ENCODE measurements at regions of chr6 and their contacts with region 1.

Region 1: DNA sequence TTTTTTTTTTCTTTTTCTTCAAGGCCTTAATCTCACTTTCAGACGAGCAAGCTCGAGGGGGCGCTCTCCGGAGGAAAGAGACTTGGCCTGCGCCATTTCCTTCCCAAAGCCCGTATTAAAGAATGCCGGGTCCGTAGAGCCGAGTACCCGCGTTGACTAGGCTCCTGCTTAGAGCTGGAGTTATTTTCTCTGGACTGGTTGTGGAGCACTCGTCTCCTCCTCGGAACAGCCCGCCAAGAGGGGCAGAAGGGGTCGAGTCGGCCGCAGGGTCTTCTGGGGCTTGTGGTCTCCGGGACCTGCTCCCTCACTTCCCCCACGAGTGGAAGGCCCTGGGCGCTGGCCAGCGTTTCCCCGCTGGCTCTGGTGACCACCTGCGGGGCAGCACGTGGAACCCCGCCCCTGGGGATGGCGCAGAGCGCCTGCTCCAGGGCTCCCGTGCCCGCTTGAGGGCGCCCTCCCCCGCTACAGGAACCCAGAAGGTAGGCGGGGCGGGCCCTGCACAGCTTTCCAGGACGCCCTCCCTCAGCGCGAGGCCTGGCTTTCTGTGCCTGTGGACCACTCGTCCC is 2.7 kb upstream of the MEI4 start:
- DNase-seq: peak; percentile 94
- ATAC-seq: peak; percentile 93
- H3K4me3 Mint-ChIP-seq: peak overlapping the region; percentile 77
- H3K27ac Mint-ChIP-seq: peak overlapping the region; percentile 93
- H3K4me1 Mint-ChIP-seq: peaks cover 20% of the 10 kb centered on the region
- H3K27me3 Mint-ChIP-seq: no peaks in the 10 kb centered on the region
- CTCF ChIP-seq: peak; percentile 30; the same call in 1 of the 2 replicates

Region 2: DNA sequence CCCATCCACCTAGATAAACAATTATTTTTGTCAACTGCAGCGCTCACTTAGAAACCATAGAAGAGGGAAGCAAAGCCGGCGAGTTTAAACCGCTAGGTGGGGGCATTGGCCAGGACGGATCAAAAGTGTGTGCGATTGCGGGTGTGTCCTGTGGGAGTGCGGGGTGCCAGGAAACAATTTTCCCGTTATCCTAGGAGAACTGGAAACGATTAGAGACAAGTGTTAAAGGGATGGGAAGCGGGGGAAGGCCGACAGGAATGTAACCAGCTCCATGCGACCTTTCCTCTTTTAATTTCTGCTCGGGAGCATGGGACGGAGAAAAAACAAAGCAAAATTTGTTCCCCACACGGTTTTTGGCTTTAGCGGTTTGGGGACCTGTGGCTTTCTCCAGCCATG is 184.1 kb before region 1 on chr6:
- CTCF ChIA-PET with region 1: interaction called, 23 read pairs
- POLR2A ChIA-PET with region 1: interaction called, 5 read pairs
- DNase-seq: peak; percentile 71
- ATAC-seq: peak; percentile 25
- H3K4me3 Mint-ChIP-seq: peak overlapping the region; percentile 93
- H3K27ac Mint-ChIP-seq: no peak overlapping the region
- H3K4me1 Mint-ChIP-seq: peaks cover 28% of the 10 kb centered on the region
- H3K27me3 Mint-ChIP-seq: peaks cover 82% of the 10 kb centered on the region
- CTCF ChIP-seq: no peak

Region 3: DNA sequence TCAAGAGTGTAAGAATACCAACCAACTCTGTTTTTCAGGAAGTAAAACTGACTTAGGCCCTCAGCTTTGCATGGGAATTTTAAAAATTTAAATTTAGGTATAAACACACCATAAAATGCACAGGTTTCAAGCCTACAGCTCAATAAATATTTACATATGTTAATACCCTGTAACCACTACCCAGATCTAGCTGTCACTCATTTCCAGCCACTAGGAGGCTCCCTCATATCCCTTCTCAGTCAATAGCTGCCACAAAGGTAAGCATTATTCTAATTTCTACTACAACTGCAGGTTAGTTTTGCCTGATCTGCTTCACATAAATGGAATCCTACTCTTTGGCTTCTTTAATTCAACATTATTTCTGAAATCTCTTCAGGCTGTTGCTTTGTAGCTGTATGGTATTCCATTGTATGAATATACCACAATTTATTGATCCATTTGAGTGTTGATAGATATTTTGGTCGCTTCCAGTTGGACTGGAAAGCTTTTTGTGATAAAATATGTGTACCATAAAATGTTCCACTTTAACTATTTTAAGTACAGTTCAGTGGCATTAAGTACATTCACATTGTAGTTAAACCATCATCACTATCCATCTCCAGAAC is 29.8 kb before region 1 on chr6:
- CTCF ChIA-PET with region 1: interaction called, 20 read pairs
- POLR2A ChIA-PET with region 1: no interaction called
- DNase-seq: peak; percentile 34
- ATAC-seq: peak; percentile 92
- H3K4me3 Mint-ChIP-seq: no peak overlapping the region
- H3K27ac Mint-ChIP-seq: no peak overlapping the region
- H3K4me1 Mint-ChIP-seq: peaks cover 15% of the 10 kb centered on the region
- H3K27me3 Mint-ChIP-seq: no peaks in the 10 kb centered on the region
- CTCF ChIP-seq: peak; percentile 40; the same call in 1 of the 2 replicates

Region 4: GRCh38 chr6:77638129-77638830 is 11.9 kb before region 1 on chr6:
- CTCF ChIA-PET with region 1: interaction called, 18 read pairs
- POLR2A ChIA-PET with region 1: no interaction called
- DNase-seq: no peak
- ATAC-seq: no peak
- H3K4me3 Mint-ChIP-seq: no peak overlapping the region
- H3K27ac Mint-ChIP-seq: no peak overlapping the region
- H3K4me1 Mint-ChIP-seq: no peaks in the 10 kb centered on the region
- H3K27me3 Mint-ChIP-seq: no peaks in the 10 kb centered on the region
- CTCF ChIP-seq: no peak

Region 5: DNA sequence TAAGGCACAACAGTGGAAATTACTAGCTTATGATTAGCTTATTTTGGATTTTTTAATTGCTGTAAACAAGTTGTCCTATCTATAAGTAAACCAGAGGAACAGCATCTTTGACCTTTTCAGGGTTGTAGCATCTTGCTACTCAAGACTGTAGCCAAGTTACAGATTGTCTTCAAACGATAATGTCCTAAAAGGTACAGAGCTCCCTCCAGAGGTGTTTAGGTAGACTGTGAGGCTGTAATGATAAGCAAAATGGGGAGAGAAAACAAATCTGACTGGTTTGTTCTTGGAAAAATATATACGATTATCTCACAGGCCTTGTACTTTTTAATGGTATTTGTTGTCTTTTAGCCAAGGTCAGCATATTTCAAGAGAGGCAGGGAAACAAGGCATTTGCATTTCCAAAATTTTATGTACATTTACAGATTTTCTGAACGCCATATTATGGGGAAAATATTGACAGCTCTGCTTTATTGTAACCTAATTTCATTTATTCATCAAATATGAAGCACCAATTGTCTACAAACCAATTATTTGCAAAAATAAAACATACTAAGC is 276.1 kb after region 1 on chr6:
- CTCF ChIA-PET with region 1: interaction called, 11 read pairs
- POLR2A ChIA-PET with region 1: no interaction called
- DNase-seq: no peak
- ATAC-seq: peak; percentile 89
- H3K4me3 Mint-ChIP-seq: no peak overlapping the region
- H3K27ac Mint-ChIP-seq: no peak overlapping the region
- H3K4me1 Mint-ChIP-seq: no peaks in the 10 kb centered on the region
- H3K27me3 Mint-ChIP-seq: no peaks in the 10 kb centered on the region
- CTCF ChIP-seq: no peak

Region 6: DNA sequence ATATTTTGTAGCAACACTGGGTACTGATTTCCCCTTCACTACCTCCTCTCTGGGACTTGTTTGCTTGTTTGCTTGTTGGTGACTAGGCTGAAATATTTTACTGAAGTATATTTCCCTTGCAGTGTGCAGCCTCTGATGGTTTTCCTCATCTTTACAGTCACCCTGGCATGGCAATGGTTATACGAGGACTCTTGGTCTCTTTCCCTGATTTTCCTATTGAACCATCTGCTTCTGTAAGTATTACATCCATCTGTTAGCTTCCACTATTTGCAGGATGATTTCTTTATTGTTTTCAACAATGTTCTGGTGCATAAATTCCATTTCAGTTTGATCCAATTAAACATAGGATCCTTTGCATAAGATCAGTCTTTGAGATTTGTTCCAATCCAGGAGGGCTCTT is 467.8 kb after region 1 on chr6:
- CTCF ChIA-PET with region 1: no interaction called
- POLR2A ChIA-PET with region 1: no interaction called
- DNase-seq: no peak
- ATAC-seq: no peak
- H3K4me3 Mint-ChIP-seq: no peak overlapping the region
- H3K27ac Mint-ChIP-seq: no peak overlapping the region
- H3K4me1 Mint-ChIP-seq: no peaks in the 10 kb centered on the region
- H3K27me3 Mint-ChIP-seq: peaks cover 4% of the 10 kb centered on the region
- CTCF ChIP-seq: no peak

Measured in WTC11 (cell line).